PC-9 (cell line): ENCODE measurements at regions of chr18 and their contacts with region 1.

Region 1: DNA sequence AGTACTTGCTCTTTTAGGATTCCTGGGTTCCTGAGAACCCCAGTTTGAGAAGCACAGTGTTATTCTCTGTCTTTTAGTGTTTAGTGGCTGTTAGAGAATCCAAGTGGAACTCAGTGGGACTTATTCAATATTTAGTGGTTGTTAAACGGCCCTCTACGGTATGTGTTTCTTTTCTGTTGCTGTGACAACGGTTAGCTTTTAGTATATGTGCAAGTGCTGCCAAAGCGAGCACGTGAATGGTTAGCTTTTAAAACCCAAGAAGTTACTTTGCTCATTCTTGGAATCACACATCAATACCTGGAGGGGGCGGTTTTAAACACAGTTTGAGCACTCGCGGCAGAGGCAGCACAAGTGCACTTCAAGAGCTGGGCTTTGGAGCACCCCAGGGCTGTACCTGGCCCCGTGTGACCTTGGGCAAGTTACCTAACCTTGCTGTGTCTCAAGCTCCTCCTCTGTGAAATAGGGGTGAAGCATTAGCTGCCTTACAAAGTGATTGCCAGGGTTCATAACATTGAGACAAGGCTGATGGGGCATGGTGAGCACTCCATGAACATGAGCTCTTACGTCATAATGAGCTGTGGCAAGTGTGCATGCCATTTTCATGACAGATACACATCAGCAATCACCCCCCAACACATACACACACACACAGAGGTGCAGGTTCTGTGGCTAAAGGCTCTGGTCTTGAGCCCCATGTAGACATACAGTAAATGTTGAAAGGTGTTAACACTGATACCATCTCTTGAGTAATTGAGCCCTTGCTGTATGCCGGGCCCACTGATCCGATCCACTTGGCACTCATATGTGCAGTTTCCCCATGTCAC is 234.1 kb downstream of the ALPK2 start:
- DNase-seq: no peak
- H3K4me3 ChIP-seq: no peak overlapping the region
- H3K27ac ChIP-seq: no peak overlapping the region
- H3K4me1 ChIP-seq: no peaks in the 10 kb centered on the region
- H3K27me3 ChIP-seq: no peaks in the 10 kb centered on the region
- CTCF ChIP-seq: no peak

Region 2: DNA sequence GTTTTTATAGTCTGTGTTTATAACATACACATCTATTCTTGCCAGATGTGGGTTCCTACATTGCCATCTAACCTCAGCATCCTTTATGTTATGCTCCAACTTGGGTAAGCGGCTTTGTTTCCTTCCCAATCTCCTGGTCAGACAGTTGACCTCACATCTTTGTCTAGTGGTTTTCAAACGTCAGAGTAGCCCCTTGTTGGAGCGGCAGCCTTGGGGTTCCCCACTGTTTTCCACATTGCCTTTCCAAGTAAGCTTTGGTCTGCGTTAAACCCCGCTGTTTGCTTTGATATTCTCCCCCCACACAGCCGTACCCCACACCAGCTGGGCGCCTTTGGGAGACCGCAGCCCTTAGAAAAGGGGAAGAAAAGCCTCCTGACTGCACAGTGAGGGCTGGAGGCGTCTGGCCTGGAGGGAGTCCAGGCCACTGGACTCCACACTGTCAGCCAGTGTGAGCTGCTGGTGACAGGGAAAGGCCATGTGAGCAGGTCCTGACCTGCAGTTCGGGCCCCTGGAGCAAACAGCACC is 359.8 kb after region 1 on chr18:
- CTCF ChIA-PET with region 1: no interaction called
- POLR2A ChIA-PET with region 1: interaction called, 43 read pairs
- intact Hi-C with region 1: no loop called
- DNase-seq: no peak
- H3K4me3 ChIP-seq: no peak overlapping the region
- H3K27ac ChIP-seq: no peak overlapping the region
- H3K4me1 ChIP-seq: no peaks in the 10 kb centered on the region
- H3K27me3 ChIP-seq: no peaks in the 10 kb centered on the region
- CTCF ChIP-seq: no peak